ENCODE measurements at regions of chr22 and their contacts with region 1.

Region 1: DNA sequence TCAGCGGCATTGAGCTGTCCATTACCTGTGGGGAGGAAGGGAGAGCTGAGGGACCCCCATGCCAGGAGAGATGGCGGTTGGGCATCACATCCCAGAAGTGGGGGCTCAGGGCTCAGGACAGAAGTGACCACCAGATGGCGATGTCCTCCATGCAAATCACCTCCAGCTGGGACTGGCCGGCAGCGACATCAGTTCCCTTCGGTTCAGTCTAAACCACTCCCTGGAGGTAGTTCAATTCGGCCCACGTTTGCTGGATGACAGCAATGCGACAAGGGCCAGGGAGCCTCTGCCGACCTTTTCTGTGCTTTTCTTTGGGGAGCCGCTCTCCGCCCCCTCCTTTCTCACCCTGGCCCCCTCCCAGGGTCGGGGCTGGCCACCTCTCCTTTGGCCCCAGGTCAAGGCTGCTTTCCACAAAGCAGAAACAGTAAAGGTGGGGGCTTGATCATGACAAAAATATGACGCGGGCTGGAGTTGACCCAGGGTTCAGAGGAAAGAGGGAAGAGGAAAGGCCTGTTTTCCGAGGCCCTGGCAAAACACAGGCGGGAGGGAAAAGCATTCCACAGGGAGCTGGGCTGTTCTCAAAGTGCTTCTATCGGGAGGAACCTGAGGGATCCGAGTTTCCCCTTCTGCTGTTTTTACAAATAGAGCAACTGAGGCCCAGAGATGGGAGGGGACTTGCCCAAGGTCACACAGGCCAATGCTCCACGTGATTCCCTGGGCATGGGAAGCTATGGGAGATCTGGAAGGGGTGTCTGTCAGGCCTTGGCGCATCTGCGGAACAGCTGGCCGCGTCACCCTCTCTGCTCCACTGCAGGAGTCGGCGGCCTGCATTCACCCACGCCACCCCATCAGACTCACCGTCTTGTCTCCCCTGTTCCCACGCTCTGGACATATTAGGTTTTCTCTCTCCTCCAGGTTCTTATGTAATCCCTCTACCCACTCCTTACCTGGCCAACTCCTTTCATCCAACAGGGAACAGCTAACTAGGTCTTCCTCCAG is 54.7 kb downstream of the FBXO7 start:
- H3K4me3 ChIP-seq: no peak overlapping the region
- H3K27ac ChIP-seq: no peak overlapping the region
- H3K4me1 ChIP-seq: peaks cover 5% of the 10 kb centered on the region
- CTCF ChIP-seq: peak; percentile 86

Region 2: DNA sequence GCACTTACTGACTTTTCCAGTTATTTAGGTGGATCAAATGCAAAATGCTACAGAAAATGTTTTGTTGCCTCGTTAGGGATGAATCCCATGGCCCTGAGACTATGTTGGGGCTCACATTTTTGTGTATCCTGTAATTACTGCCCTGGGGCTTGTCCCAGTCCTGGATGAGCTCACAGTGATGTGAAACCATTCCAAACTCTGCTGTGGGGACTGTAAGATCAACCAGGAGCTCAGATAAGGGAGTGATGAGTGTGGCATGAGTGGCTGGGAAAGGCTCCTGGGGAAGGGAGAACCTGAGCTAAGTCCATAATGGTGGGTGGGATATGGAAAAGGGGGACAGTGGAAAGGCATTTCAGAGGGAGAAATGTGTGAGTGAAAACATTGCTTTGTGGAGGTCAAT is 432.3 kb before region 1 on chr22:
- CTCF ChIA-PET with region 1: no interaction called
- POLR2A ChIA-PET with region 1: no interaction called
- H3K4me3 ChIP-seq: no peak overlapping the region
- H3K27ac ChIP-seq: no peak overlapping the region
- H3K4me1 ChIP-seq: no peaks in the 10 kb centered on the region
- CTCF ChIP-seq: no peak

Region 3: DNA sequence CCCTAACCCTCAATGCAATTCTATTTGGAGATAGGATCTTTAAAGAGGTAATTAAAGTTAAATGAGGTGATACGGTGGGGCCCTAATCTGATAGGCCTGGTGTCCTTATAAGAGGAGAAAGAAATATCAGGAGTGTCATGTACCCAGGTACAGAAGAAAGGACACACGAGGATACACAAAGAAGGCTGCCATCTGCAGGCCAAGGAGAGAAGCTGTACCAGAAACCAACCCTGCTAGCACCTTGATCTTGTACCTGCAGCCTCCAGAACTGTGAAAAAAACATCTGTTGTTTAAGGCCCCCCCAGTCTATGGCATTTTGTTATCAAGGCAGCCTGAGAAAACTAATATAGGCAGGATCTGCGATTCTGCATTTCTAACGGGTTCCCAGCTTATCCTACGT is 10.4 kb before region 1 on chr22:
- CTCF ChIA-PET with region 1: interaction called, 28 read pairs
- POLR2A ChIA-PET with region 1: no interaction called
- H3K4me3 ChIP-seq: no peak overlapping the region
- H3K27ac ChIP-seq: no peak overlapping the region
- H3K4me1 ChIP-seq: no peaks in the 10 kb centered on the region
- CTCF ChIP-seq: no peak

Region 4: DNA sequence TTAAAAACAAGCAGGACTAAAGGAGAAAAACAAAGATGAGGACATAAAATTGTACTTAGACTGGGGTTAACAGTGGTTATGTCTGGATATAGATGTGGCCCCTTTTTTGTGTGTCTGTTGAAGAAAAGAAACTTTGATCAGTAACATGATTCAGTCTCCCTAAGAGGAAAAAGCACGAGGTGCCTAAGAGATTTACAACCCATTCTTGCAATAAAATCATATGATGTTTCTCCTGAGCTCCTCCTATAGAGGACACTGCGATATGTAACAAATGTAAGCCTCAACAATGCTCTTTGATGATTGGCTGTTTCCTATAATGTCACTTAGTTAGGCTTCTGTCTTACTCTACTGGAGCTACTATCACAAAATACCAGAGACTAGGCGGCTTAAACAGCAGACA is 23.2 kb after region 1 on chr22:
- CTCF ChIA-PET with region 1: interaction called, 4 read pairs
- POLR2A ChIA-PET with region 1: interaction called, 10 read pairs
- H3K4me3 ChIP-seq: no peak overlapping the region
- H3K27ac ChIP-seq: no peak overlapping the region
- H3K4me1 ChIP-seq: no peaks in the 10 kb centered on the region
- CTCF ChIP-seq: no peak

Region 5: DNA sequence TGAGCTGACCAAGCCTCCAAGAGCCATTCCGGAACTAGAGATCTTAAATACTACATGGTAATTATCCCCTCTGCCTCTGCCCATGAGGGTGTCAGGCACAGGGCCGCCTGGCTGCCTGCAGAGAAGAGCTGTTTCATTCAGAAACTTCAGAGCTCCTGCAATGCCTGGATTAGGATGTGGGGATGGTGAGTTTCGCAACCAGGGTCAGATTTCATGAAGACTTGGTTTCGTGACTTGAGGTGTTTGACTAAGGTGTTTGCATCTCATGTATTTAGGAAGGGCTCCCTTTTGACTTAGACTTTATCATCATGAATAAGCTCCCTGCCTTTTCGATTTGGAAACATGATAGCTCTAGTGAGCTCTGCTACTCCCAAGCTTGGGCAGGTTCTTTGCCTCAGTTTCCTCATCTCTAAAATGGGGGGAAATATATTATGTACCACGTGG is 281.3 kb after region 1 on chr22:
- CTCF ChIA-PET with region 1: interaction called, 11 read pairs
- POLR2A ChIA-PET with region 1: no interaction called
- H3K4me3 ChIP-seq: no peak overlapping the region
- H3K27ac ChIP-seq: no peak overlapping the region
- H3K4me1 ChIP-seq: peaks cover 3% of the 10 kb centered on the region
- CTCF ChIP-seq: no peak

Region 6: GRCh38 chr22:33000342-33001280 is 471.3 kb after region 1 on chr22:
- CTCF ChIA-PET with region 1: interaction called, 34 read pairs
- POLR2A ChIA-PET with region 1: interaction called, 4 read pairs
- H3K4me3 ChIP-seq: no peak overlapping the region
- H3K27ac ChIP-seq: no peak overlapping the region
- H3K4me1 ChIP-seq: no peaks in the 10 kb centered on the region
- CTCF ChIP-seq: peak; percentile 76